ENCODE measurements at regions of chr18 and their contacts with region 1.

Region 1: GRCh38 chr18:22800551-22800951 is 132.6 kb upstream of the RBBP8 start:
- DNase-seq: no peak
- H3K4me3 Mint-ChIP-seq: no peak overlapping the region
- H3K27ac Mint-ChIP-seq: no peak overlapping the region
- H3K4me1 Mint-ChIP-seq: no peaks in the 10 kb centered on the region
- H3K27me3 Mint-ChIP-seq: peaks cover 11% of the 10 kb centered on the region

Region 2: DNA sequence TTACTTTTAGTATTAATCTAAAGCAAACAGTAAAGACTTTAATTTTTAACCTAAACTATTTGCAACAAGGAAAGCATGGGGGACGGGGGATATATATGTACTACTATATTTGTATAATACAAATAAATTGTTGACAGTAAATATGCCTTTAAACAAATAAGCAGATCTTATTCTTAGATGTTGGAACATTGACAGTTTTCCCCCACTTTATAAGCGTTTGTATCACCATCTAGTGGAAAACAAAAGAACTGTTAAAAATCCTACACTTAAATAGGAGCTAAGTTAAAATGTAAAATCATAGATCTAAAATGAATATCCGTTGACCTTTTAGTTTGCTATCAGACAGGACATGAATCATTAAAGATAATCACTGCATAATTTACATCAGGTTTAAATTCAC is 182.6 kb after region 1 on chr18:
- intact Hi-C with region 1: loop called (anchors 1 kb)
- DNase-seq: no peak
- H3K4me3 Mint-ChIP-seq: no peak overlapping the region
- H3K27ac Mint-ChIP-seq: no peak overlapping the region
- H3K4me1 Mint-ChIP-seq: peaks cover 15% of the 10 kb centered on the region
- H3K27me3 Mint-ChIP-seq: no peaks in the 10 kb centered on the region

Region 3: DNA sequence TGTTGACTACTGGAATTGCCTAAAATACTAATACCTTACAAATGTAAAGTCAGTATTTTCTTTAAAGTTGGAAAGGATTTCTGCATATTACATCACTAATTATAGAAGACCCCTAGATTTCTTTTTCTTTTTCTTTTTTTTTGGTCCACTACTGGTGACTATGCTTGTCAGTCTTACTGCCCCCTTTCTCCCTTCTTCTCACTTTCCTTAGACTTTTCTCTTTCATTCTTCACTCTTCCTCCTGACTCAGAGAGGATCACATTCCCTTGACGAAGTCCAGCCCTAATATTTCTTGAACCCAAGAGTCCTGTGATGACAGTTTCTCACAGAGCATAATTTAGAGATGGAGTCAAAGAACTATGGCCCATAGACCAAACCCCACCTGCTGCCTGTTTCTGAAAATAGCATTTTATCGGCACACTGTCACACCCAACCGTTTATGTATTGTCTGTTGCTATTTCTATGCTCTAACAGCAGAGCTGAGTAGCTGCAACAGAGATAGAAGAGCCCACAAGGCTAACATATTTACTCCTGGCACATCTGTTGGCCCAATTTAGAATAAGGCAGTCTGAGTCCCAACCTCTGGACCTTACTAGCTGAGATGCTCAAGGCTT is 611.9 kb after region 1 on chr18:
- intact Hi-C with region 1: loop called (anchors 5 kb)
- DNase-seq: no peak
- H3K4me3 Mint-ChIP-seq: no peak overlapping the region
- H3K27ac Mint-ChIP-seq: no peak overlapping the region
- H3K4me1 Mint-ChIP-seq: no peaks in the 10 kb centered on the region
- H3K27me3 Mint-ChIP-seq: no peaks in the 10 kb centered on the region